ENCODE measurements at regions of chr6 and their contacts with region 1.

Region 1: DNA sequence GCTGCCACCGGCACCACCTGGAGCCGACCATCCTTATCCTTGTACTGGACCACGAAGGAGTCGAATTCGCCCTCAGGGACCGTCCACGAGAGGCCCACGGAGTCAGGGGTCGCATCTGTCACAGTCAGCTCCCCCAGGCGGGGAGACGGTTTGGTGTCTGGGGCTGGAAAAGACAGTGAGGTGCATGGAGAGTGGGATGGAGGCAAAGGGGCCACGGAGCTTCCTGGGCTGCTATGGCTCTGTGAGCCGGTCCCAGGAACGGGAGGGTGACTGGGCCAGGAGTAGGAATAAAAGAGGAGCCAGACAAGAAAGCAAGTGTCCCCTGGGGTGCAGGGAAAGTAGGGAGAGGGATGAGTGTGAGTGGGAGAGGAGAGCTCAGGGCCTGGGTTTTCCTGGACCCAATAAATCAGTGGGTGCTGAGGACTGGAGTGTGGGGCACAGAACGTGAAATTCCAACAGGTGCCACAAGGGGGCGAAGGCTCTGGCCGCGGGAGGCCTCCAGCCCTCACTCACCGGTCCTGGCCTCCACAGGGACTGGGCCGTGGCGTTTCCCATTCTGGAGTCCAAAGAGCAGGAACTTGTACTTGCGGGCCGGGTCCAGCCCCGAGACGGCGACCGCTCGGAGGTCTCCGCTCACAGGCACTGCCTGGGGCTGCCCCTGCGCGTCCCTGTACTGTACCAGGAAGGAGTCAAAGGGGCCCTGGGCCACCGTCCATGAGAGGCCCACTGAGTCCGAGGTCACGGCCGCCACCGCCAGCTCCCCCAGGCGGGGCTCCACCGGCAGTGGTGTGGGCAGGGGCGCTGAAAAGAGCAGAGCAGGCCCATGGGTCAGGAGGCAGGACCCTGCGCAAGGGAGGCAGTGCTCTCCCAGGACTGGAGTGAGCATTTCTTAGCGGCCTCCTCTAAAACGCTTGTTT is 9.9 kb downstream of the CYP21A2 start:
- DNase-seq: peak; percentile 89
- H3K4me3 ChIP-seq: no peak overlapping the region
- H3K27ac ChIP-seq: peak overlapping the region; percentile 54 to 83 (median 66)
- H3K4me1 ChIP-seq: peaks cover 0 to 29% (median 27%) of the 10 kb centered on the region in 4 donors
- H3K27me3 ChIP-seq: no peaks in the 10 kb centered on the region
- CTCF ChIP-seq: peak; percentile 72 to 93 (median 77)
- EP300 ChIP-seq: no peak
- POLR2A ChIP-seq: no peak

Region 2: DNA sequence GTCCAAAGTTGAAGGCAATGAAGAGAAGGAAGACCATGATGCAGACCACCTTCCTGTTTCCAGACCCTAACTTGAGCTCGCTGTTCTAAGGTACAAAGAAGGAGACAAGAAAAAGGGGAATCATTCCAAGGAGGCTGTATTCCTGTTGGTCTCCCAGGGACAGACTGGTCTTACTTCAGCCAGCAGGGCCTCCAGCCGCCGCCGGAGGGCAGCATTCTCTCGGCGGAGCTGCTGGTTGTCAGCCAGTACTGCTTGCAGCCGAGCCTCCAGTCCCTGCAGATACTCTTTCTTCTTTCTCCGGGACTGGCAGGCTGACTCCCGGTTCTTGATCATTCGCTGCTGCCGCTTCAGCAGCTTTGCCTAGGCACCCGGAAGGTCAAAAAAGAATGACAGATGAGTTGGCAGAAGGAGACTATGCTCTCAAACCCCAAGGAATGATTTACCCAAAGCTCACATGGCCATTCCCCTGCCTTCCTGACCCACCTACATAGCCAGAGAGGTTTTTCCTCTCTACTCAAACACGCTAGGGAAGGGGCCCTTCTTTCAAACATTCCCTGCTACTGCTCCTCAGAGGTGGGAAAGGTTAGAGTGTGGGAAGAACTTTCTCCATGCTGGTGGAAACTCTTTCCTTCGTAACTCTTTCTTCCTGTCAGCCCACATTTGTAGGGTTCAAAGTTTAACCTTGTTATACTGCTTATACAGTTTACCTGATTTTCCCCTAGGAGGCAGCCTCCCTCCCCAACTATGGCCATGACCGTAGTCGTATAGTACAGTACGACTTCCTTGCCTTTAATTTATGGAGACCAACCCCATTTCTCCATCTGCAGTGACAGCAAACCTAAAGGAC is 70.9 kb after region 1 on chr6:
- intact Hi-C with region 1: loop called (anchors 10 kb)
- DNase-seq: peak; percentile 96
- H3K4me3 ChIP-seq: no peak overlapping the region
- H3K27ac ChIP-seq: peak overlapping the region; percentile 52 to 69 (median 63)
- H3K4me1 ChIP-seq: peaks cover 0 to 18% (median 16%) of the 10 kb centered on the region in 4 donors
- H3K27me3 ChIP-seq: no peaks in the 10 kb centered on the region
- CTCF ChIP-seq: peak; percentile 77 to 93 (median 90)
- EP300 ChIP-seq: no peak
- POLR2A ChIP-seq: no peak

Region 3: GRCh38 chr6:32741031-32741960 is 693.2 kb after region 1 on chr6 and contains the start of gene HLA-DQA2:
- intact Hi-C with region 1: no loop called
- DNase-seq: no peak
- H3K4me3 ChIP-seq: no peak within 1 kb of the TSS
- H3K27ac ChIP-seq: no peak within 1 kb of the TSS
- H3K4me1 ChIP-seq: no peaks in the 10 kb centered on the region
- H3K27me3 ChIP-seq: no peaks in the 10 kb centered on the region
- CTCF ChIP-seq: no peak
- EP300 ChIP-seq: no peak
- POLR2A ChIP-seq: no peak
- total RNA-seq, gene HLA-DQA2: 0.36 to 1.7 (median 1.2) TPM in 3 of 4 donors, not detected in the other